Left ventricle myocardium superior (tissue), 1 donor: ENCODE measurements at regions of chr6 and their contacts with region 1.

Region 1: DNA sequence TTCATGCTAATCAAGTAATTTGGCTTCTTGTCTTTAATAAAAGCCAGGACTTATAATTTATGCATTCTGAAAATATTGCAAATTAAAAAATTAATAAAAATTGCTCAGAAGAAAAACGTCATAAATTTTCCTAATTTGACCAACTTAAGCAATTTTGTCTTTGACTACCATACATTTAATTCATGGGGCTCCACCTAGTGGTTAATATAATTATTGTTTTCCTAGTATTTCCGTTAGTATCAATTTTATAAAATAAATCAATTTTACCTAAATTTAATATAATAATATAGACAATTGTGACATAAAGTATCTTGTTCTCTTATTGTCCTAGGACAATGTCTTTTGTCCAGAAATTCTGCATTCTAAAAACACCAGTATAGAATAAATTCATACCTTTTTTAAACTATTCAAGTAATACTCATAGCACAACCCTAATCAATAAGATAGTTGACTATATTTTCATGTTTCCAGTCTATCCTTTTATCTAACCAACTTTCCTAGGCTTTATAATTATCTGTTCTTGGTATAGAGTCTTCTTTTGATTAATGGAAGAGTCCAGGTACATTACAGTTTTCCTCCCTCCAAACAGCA is 319.9 kb downstream of the TRDN start:
- DNase-seq: no peak
- ATAC-seq: no peak

Region 2: GRCh38 chr6:122730775-122731386 is 585.9 kb before region 1 on chr6:
- intact Hi-C with region 1: loop called (anchors 10 kb)
- DNase-seq: no peak
- ATAC-seq: no peak

Region 3: GRCh38 chr6:122869437-122870024 is 447.3 kb before region 1 on chr6:
- intact Hi-C with region 1: loop called (anchors 5 kb)
- DNase-seq: no peak
- ATAC-seq: peak; percentile 76